ENCODE measurements at regions of chr19 and their contacts with region 1.

Region 1: GRCh38 chr19:33302175-33302973 is at the start of gene CEBPA:
- DNase-seq: peak in 1 of 2 donors; percentile 95
- H3K4me3 ChIP-seq: peak within 1 kb of the TSS; percentile 64
- CTCF ChIP-seq: no peak
- POLR2A ChIP-seq: peak in 1 of 2 donors; percentile 95
- total RNA-seq, gene CEBPA: 228 to 297 (median 255) TPM

Region 2: GRCh38 chr19:33235269-33235995 is 66.9 kb before region 1 on chr19:
- intact Hi-C with region 1: loop called (anchors 10 kb)
- DNase-seq: peak; percentile 79 to 97
- H3K4me3 ChIP-seq: no peak overlapping the region
- CTCF ChIP-seq: peak in 1 of 3 donors; percentile 80
- POLR2A ChIP-seq: no peak

Region 3: DNA sequence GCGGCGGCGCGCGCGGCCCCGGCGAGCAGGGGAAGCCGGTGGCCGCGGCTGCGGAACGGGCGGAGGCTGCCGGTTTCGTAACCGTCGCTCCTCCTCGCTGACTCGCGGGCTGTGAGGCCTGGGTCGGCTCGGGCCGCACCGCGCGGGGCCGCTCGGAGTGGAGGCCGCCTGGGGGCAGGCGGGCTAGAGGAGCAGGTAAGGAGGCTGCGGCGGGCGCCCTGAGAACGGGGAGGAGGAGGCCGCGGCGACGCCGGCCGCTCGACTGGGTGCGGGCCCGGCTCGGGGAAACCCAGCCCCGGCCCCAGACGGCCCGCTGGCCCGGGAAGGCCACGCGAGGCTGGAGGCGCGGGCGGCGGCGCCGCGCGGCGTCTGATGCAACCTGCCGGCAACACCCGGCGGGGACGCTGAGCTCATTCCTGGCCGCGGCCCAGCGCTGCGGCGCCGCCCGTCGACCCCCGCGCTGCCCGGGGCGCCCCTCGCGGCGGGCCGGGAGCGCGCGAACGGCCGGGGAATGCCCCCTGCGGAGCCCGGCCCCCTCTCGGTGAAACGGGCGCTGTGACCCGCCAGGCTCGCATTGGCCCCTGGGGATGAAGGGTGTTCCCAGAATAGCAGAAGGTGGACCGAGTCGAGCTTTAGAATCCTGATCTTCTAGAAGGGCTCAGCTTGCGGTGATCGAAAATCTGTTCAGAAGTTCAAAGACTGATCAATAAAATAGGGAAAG is 71.5 kb after region 1 on chr19 and contains the start of gene CEBPG:
- intact Hi-C with region 1: loop called (anchors 2 kb)
- DNase-seq: peak in 1 of 2 donors; percentile 89
- H3K4me3 ChIP-seq: peak within 1 kb of the TSS; percentile 61
- CTCF ChIP-seq: no peak
- POLR2A ChIP-seq: peak in 1 of 2 donors; percentile 35
- total RNA-seq, gene CEBPG: 38.0 to 48.3 (median 43.1) TPM

Measured in lower leg skin (tissue), 4 donors.